A673 (cell line): ENCODE measurements at regions of chr19 and their contacts with region 1.

Region 1: GRCh38 chr19:49843265-49843664 is 7.7 kb upstream of the PTOV1 start:
- DNase-seq: no peak
- H3K4me3 ChIP-seq: no peak overlapping the region
- H3K27ac ChIP-seq: no peak overlapping the region
- H3K4me1 ChIP-seq: no peaks in the 10 kb centered on the region
- H3K27me3 ChIP-seq: no peaks in the 10 kb centered on the region
- CTCF ChIP-seq: no peak

Region 2: GRCh38 chr19:49793445-49793783 is 49.9 kb before region 1 on chr19:
- CTCF ChIA-PET with region 1: no interaction called
- POLR2A ChIA-PET with region 1: no interaction called
- intact Hi-C with region 1: no loop called
- DNase-seq: no peak
- H3K4me3 ChIP-seq: no peak overlapping the region
- H3K27ac ChIP-seq: no peak overlapping the region
- H3K4me1 ChIP-seq: no peaks in the 10 kb centered on the region
- H3K27me3 ChIP-seq: no peaks in the 10 kb centered on the region
- CTCF ChIP-seq: no peak

Region 3: GRCh38 chr19:49817964-49818648 is 25.2 kb before region 1 on chr19 and contains the start of gene MED25:
- CTCF ChIA-PET with region 1: no interaction called
- POLR2A ChIA-PET with region 1: interaction called, 17 read pairs
- intact Hi-C with region 1: no loop called
- DNase-seq: peak; percentile 91
- H3K4me3 ChIP-seq: peak within 1 kb of the TSS; percentile 88
- H3K27ac ChIP-seq: peak within 1 kb of the TSS; percentile 93
- H3K4me1 ChIP-seq: peaks cover 12% of the 10 kb centered on the region
- H3K27me3 ChIP-seq: no peaks in the 10 kb centered on the region
- CTCF ChIP-seq: 0 out of 2 replicates have a peak, but pooled peaks have one; percentile 10
- total RNA-seq, gene MED25: 93.0 and 111 TPM in 2 replicates